ENCODE measurements at regions of chr7 and their contacts with region 1.

Region 1: DNA sequence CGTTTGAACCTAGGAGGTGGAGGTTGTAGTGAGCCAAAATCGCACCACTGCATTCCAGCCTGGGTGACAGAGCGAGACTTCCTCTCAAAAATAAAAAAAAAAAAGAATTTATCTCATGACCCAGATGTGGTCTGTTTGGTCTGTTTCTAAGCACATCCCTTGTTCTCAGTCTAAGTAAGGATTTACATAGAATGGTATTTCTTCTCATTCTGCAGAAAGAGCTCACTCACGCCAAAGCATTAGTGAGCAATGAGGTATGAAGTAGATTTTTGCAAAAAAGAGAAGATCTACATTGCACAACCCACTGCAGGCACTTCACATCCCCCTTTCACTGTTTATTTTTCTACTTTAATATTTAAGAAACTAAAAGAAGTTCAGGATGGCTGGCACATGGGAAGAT is 76.5 kb upstream of the FGL2 start:
- DNase-seq: no peak
- ATAC-seq: no peak
- H3K4me3 ChIP-seq: no peak overlapping the region
- H3K27ac ChIP-seq: no peak overlapping the region
- H3K4me1 ChIP-seq: peaks cover 0 to 2% of the 10 kb centered on the region in 2 donors
- H3K27me3 ChIP-seq: no peaks in the 10 kb centered on the region

Region 2: GRCh38 chr7:76515999-76516443 is 760.1 kb before region 1 on chr7:
- intact Hi-C with region 1: no loop called
- DNase-seq: peak in 1 of 2 donors; percentile 58
- ATAC-seq: no peak
- H3K4me3 ChIP-seq: no peak overlapping the region
- H3K27ac ChIP-seq: no peak overlapping the region
- H3K4me1 ChIP-seq: no peaks in the 10 kb centered on the region
- H3K27me3 ChIP-seq: no peaks in the 10 kb centered on the region

Region 3: GRCh38 chr7:77309714-77310220 is 33.6 kb after region 1 on chr7:
- intact Hi-C with region 1: loop called in 1 of 2 experiments (anchors 5 kb)
- DNase-seq: no peak
- ATAC-seq: no peak
- H3K4me3 ChIP-seq: no peak overlapping the region
- H3K27ac ChIP-seq: no peak overlapping the region
- H3K4me1 ChIP-seq: peaks cover 0 to 19% of the 10 kb centered on the region in 2 donors
- H3K27me3 ChIP-seq: no peaks in the 10 kb centered on the region

Measured in aorta (tissue), 5 donors.